ENCODE measurements at regions of chr13 and their contacts with region 1.

Region 1: DNA sequence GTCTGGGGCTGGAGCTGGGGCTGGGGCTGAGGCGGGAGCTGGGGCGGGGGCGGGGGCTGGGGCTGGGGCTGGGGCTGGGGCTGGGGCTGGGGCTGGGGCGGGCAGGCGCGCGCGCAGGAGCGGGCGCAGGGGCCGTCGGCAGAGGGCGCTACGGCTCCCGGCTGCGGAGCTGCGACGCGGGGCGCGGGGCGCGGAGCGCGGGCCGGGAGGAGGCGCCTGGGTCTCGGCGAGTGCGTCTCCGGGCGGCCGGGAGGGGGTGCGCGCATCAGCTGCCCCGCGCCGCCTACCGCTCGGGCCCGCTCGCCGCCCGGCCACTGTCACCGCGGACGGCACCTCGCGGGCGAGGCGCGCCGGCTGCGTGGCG is 422 bp upstream of the MTUS2 start:
- DNase-seq: peak; percentile 52 to 88 (median 82)
- ATAC-seq: peak; percentile 87 to 92
- H3K4me3 ChIP-seq: peak overlapping the region; percentile 65
- H3K27ac ChIP-seq: no peak overlapping the region
- H3K4me1 ChIP-seq: no peaks in the 10 kb centered on the region
- H3K27me3 ChIP-seq: no peaks in the 10 kb centered on the region

Region 2: GRCh38 chr13:28953714-28954418 is 134.1 kb after region 1 on chr13:
- intact Hi-C with region 1: loop called in 1 of 4 experiments (anchors 10 kb)
- DNase-seq: no peak
- ATAC-seq: no peak
- H3K4me3 ChIP-seq: no peak overlapping the region
- H3K27ac ChIP-seq: no peak overlapping the region
- H3K4me1 ChIP-seq: no peaks in the 10 kb centered on the region
- H3K27me3 ChIP-seq: no peaks in the 10 kb centered on the region

Region 3: DNA sequence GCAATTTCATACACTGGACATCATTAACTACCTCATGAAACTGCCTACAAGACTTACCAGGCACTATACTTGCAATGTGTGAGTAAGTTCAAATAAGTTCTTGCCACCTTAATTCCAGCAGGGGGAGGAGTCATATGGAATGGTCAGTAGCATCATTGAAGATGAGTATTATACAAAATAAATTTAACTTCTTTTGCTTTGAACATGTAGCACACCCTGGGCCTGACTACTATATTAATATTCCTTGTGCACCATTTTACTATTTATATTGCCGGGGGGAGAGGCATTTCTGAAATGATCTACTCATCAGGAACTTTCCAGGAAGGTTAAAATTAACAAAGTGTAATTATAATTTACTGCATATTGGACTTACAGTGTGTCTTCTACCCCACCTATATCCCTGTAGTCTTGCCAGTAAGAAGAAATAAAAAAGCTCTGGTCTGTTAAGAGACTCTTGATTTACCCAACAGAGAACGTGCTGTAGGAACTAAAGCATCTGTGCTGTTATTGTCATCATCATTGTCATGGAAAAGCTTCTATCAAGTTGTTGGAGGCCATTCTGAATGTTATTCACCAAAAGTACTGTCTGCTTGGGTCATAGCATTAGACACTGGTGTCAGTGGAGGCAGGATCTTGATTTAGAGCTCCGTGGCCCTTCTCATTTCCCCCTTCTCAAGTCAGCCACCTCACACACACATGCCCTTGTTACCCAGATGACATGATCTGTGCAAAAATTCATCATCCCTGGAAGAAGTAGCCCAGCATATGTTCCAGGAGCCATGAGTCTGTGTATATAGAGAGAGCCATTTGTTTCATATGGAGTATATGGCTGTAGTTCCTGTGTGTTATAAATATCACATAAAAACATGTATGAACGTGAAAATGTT is 147.6 kb after region 1 on chr13:
- intact Hi-C with region 1: loop called in 1 of 4 experiments (anchors 10 kb)
- DNase-seq: no peak
- ATAC-seq: no peak
- H3K4me3 ChIP-seq: no peak overlapping the region
- H3K27ac ChIP-seq: no peak overlapping the region
- H3K4me1 ChIP-seq: no peaks in the 10 kb centered on the region
- H3K27me3 ChIP-seq: no peaks in the 10 kb centered on the region

Region 4: GRCh38 chr13:29081036-29081435 is 261.3 kb after region 1 on chr13:
- intact Hi-C with region 1: no loop called
- DNase-seq: no peak
- ATAC-seq: no peak
- H3K4me3 ChIP-seq: no peak overlapping the region
- H3K27ac ChIP-seq: no peak overlapping the region
- H3K4me1 ChIP-seq: no peaks in the 10 kb centered on the region
- H3K27me3 ChIP-seq: no peaks in the 10 kb centered on the region

Region 5: DNA sequence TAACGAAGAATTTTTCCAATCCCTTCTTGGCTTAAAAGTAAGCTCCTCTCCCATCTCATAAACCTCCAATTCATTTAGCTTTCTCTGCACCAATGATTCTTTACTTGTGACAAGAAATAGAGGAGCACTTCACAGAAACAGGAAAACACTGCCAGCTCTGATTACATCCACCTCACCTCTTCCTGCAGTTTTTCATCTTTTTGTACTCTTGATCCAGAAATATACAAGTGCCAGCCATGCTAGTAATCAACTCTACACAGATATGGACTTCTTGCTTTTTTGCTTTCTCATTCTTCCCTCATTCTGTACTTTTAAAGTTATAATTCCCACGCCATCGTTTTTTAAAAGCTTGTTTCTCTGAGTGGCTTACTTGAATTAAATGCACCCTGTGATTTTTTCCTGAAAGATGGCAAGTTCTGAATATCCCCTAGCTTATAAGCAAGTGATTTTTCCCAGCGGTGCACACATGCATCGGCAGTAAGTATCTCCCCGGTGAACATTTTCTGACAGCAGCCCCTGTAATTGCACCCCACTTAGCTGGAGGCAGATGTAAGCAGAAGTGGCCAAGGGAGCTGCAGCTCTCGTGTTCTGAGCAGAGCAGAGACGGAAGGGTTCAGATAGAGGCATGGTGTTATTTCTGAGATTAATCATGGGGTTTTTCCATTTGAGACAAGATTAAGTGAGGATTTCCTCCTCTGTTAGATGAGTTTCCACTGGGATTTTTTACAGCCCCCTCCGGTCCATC is 435.1 kb after region 1 on chr13:
- intact Hi-C with region 1: loop called in 1 of 4 experiments (anchors 10 kb)
- DNase-seq: no peak
- ATAC-seq: no peak
- H3K4me3 ChIP-seq: no peak overlapping the region
- H3K27ac ChIP-seq: no peak overlapping the region
- H3K4me1 ChIP-seq: no peaks in the 10 kb centered on the region
- H3K27me3 ChIP-seq: no peaks in the 10 kb centered on the region

Region 6: DNA sequence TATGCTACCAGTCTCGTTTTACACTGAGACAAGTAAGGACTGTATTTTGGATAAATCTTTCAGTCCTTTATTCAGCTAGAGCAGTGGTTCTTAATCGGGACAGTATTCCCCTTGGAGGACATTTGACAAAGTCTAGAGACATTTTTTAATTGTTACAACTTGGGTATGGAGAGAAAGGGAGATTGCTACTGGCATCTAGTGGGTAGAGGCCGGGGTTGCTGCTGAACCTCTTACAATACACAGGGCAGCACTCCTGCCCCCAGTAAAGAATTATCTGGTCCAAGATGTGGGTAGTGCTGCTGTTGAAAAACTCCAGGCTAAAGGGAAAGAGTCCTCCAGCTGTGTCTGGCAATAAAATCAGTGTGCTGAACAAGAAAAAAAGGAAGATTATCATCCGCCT is 441.0 kb after region 1 on chr13:
- intact Hi-C with region 1: loop called in 3 of 4 experiments (anchors 5 to 10 kb)
- DNase-seq: no peak
- ATAC-seq: peak; percentile 59 to 75
- H3K4me3 ChIP-seq: no peak overlapping the region
- H3K27ac ChIP-seq: no peak overlapping the region
- H3K4me1 ChIP-seq: peaks cover 2% of the 10 kb centered on the region
- H3K27me3 ChIP-seq: no peaks in the 10 kb centered on the region

Region 7: DNA sequence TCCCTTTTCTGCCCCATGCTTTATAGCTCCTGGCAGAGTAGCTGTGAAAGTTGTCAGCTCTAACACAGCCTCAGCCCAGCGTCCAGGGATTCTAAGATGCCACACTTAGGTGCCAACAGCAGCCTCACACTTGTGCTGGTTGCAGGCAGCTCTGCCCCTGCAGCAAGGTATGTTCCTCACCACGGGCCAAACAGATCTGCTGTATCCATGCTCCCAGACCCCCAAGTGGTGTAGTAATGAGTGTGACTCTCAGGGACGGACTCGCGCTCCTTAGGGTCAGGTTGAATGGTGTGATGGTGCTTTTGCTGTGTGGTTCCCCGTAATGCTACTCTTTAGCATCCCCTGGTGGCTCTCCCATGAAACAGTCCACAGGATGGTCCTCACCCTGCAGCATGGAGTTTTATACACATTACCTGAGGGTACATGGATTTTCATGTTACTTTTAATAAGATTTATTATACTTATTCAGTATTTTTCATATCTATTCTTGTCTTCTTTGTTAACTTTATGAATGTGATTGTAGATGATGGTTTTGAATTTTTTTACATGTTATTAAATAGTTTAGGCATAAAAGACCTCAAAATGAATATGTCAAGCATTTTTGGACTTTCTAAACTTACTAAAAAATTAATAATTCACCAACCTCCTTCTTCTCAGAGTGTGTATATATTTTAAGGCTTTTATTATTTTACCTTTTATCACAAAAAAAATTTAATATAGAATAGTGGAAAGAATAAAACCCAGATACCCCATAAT is 543.3 kb after region 1 on chr13:
- intact Hi-C with region 1: loop called (anchors 5 to 10 kb)
- DNase-seq: peak in 1 of 3 donors; percentile 15
- ATAC-seq: peak; percentile 88 to 93
- H3K4me3 ChIP-seq: no peak overlapping the region
- H3K27ac ChIP-seq: no peak overlapping the region
- H3K4me1 ChIP-seq: no peaks in the 10 kb centered on the region
- H3K27me3 ChIP-seq: no peaks in the 10 kb centered on the region

Measured in right cardiac atrium (tissue), 5 donors.